ENCODE measurements at regions of chr7 and their contacts with region 1.

Region 1: GRCh38 chr7:115984120-115984519 is 46.4 kb downstream of the TFEC start:
- DNase-seq: no peak
- ATAC-seq: no peak
- H3K4me3 ChIP-seq: no peak overlapping the region
- H3K27ac ChIP-seq: no peak overlapping the region
- H3K4me1 ChIP-seq: no peaks in the 10 kb centered on the region
- H3K27me3 ChIP-seq: peaks cover 32% of the 10 kb centered on the region
- CTCF ChIP-seq: no peak

Region 2: DNA sequence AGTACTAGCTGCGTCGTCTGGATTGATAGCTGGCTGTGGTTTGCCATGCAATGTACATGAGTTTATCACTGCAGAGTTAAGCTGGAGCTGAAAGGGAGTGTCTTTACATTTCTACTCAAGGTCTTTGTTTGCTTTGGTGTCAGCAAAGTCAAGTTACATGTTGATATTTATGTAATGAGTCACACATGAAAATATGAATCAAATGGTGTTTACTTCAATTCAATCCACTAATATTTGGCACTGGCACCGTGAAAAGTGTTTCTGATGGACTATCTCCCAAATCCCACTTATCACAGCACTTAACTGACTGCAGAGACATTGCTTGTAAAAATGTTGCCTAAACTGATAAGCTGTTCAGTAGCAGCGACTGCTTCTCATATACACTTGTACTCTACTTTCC is 349.5 kb before region 1 on chr7:
- CTCF ChIA-PET with region 1: no interaction called
- POLR2A ChIA-PET with region 1: no interaction called
- intact Hi-C with region 1: loop called (anchors 5 kb)
- DNase-seq: peak; percentile 83
- ATAC-seq: peak; percentile 99
- H3K4me3 ChIP-seq: no peak overlapping the region
- H3K27ac ChIP-seq: peak overlapping the region; percentile 32
- H3K4me1 ChIP-seq: peaks cover 11% of the 10 kb centered on the region
- H3K27me3 ChIP-seq: no peaks in the 10 kb centered on the region
- CTCF ChIP-seq: no peak

Region 3: GRCh38 chr7:115941703-115942268 is 42.3 kb before region 1 on chr7:
- CTCF ChIA-PET with region 1: no interaction called
- POLR2A ChIA-PET with region 1: no interaction called
- intact Hi-C with region 1: no loop called
- DNase-seq: peak; percentile 45
- ATAC-seq: peak; percentile 88
- H3K4me3 ChIP-seq: no peak overlapping the region
- H3K27ac ChIP-seq: no peak overlapping the region
- H3K4me1 ChIP-seq: no peaks in the 10 kb centered on the region
- H3K27me3 ChIP-seq: peaks cover 23% of the 10 kb centered on the region; the same call in 1 of the 2 replicates
- CTCF ChIP-seq: no peak